Gastrocnemius medialis (tissue), 4 donors: ENCODE measurements at regions of chr17 and their contacts with region 1.

Region 1: DNA sequence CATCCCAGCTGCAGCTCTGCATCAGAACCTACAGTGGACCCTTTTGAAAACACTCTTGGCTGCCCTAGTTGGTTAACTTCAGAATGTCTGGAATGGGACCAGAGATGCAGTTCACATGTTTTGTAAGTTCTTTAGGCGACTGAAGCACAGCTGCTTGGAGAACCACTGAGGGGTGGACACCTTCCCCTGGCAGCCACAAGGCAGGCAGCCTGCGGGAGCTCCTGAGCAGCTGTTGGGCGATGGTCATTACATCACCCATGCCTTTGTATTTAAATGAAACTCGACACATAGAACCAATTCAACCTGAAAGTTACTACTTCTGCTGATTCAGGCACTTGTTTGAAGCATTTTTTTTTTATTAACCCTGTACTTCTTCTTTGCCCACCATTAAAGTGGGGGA is 151.5 kb downstream of the LGALS9B start:
- DNase-seq: no peak
- ATAC-seq: no peak
- H3K4me3 ChIP-seq: no peak overlapping the region
- H3K27ac ChIP-seq: no peak overlapping the region
- H3K4me1 ChIP-seq: no peaks in the 10 kb centered on the region
- H3K27me3 ChIP-seq: no peaks in the 10 kb centered on the region
- CTCF ChIP-seq: no peak
- POLR2A ChIP-seq: no peak

Region 2: GRCh38 chr17:19986941-19987861 is 328.6 kb before region 1 on chr17:
- in situ Hi-C with region 1: loop called in 2 of 4 experiments (anchors 25 kb)
- intact Hi-C with region 1: loop called (anchors 5 kb)
- DNase-seq: no peak
- ATAC-seq: no peak
- H3K4me3 ChIP-seq: no peak overlapping the region
- H3K27ac ChIP-seq: no peak overlapping the region
- H3K4me1 ChIP-seq: no peaks in the 10 kb centered on the region
- H3K27me3 ChIP-seq: no peaks in the 10 kb centered on the region
- CTCF ChIP-seq: no peak
- POLR2A ChIP-seq: no peak

Region 3: DNA sequence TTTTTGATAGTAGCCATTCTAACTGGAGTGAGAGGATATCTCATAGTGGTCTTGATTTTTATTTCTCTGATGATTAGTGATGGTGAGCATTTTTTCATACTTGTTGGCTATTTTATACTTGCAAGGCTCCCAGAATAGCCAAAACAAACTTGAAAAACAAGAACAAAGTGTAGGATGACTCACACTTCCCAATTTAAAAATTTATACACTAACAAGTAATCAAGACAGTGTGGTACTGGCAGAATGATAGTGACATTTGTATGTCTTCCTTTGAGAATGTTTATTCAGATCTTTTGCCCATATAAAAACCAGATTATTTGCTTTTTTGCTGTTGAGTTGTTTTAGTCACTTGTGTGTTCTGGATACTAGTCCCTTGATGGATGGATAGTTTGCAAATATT is 288.9 kb before region 1 on chr17:
- in situ Hi-C with region 1: no loop called
- intact Hi-C with region 1: no loop called
- DNase-seq: no peak
- ATAC-seq: no peak
- H3K4me3 ChIP-seq: no peak overlapping the region
- H3K27ac ChIP-seq: no peak overlapping the region
- H3K4me1 ChIP-seq: no peaks in the 10 kb centered on the region
- H3K27me3 ChIP-seq: no peaks in the 10 kb centered on the region
- CTCF ChIP-seq: no peak
- POLR2A ChIP-seq: no peak